Mammary epithelial cell (primary cell): ENCODE measurements at regions of chr20 and their contacts with region 1.

Region 1: DNA sequence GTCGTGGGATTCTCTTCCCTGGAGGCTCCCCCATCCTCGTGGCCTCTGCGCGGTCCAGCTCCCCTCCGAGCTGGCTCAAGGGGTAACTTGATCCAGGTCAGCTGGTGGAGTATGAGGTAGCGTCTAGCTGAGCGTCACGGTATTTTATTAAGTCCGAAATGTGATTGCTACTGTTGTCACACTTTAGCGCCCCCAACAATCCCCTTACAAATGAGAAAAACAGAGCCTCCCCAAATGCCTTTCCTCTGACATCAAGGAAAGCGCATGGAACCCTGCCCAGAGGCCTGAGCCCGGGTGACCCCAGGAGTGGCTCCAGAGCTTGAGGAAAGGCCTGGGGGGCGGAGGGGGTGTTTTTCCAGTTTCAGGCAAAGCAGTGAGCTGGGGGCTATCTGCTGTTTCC is 192.4 kb downstream of the ZMYND8 start:
- DNase-seq: no peak
- H3K4me3 ChIP-seq: no peak overlapping the region
- H3K27ac ChIP-seq: no peak overlapping the region
- H3K4me1 ChIP-seq: no peaks in the 10 kb centered on the region
- H3K27me3 ChIP-seq: no peaks in the 10 kb centered on the region
- CTCF ChIP-seq: no peak

Region 2: GRCh38 chr20:46998477-46999240 is 165.5 kb before region 1 on chr20:
- CTCF ChIA-PET with region 1: no interaction called
- dilution Hi-C with region 1: loop called (anchors 5 kb)
- in situ Hi-C with region 1: no loop called
- intact Hi-C with region 1: no loop called
- DNase-seq: no peak
- H3K4me3 ChIP-seq: no peak overlapping the region
- H3K27ac ChIP-seq: no peak overlapping the region
- H3K4me1 ChIP-seq: no peaks in the 10 kb centered on the region
- H3K27me3 ChIP-seq: no peaks in the 10 kb centered on the region
- CTCF ChIP-seq: no peak

Region 3: GRCh38 chr20:47125583-47126373 is 38.4 kb before region 1 on chr20:
- CTCF ChIA-PET with region 1: no interaction called
- dilution Hi-C with region 1: loop called (anchors 5 kb)
- in situ Hi-C with region 1: no loop called
- intact Hi-C with region 1: no loop called
- DNase-seq: peak; percentile 94
- H3K4me3 ChIP-seq: peak overlapping the region; percentile 7 to 23 (median 20)
- H3K27ac ChIP-seq: peak overlapping the region; percentile 88
- H3K4me1 ChIP-seq: peaks cover 35% of the 10 kb centered on the region
- H3K27me3 ChIP-seq: no peaks in the 10 kb centered on the region
- CTCF ChIP-seq: peak in 1 of 2 donors; percentile 11